Activated CD4-positive, alpha-beta memory T cell treated with anti-CD3 and anti-CD28 coated beads for 36 hours (primary cell): ENCODE measurements at regions of chr3 and their contacts with region 1.

Region 1: DNA sequence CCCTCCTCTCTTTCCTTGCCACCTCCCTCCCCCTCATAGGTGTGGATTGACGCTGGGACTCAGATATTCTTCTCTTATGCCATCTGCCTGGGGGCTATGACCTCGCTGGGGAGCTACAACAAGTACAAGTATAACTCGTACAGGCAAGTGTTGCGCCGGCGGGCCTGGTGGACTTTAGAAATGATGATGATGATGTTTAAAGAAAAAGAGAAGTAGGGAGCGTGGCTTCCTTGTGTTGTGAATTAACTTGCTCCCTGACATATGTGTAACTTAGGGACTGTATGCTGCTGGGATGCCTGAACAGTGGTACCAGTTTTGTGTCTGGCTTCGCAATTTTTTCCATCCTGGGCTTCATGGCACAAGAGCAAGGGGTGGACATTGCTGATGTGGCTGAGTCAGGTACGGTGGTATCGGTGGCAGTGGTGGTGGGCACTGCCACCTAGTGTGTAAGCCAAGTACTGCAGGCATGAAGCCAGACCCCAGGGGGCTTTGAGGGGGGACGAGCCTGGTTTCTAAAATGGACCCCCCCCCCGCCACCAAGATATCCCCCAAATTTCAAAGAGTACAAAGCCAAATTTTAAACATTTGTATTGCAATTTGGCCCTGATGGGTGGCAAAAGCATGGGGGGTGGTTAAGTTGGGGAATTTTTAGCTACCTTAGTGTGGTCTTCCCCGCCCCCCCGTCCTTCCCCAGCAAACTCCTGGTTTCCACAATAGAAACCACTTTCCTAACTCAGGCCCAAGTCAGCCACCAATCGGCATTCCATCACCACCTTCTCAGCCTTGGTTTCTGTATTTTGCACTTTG is 65.6 kb downstream of the SLC6A6 start:
- DNase-seq: peak; percentile 49
- H3K4me3 Mint-ChIP-seq: no peak overlapping the region
- H3K27ac Mint-ChIP-seq: no peak overlapping the region
- H3K4me1 Mint-ChIP-seq: peaks cover 4% of the 10 kb centered on the region
- H3K27me3 Mint-ChIP-seq: no peaks in the 10 kb centered on the region

Region 2: DNA sequence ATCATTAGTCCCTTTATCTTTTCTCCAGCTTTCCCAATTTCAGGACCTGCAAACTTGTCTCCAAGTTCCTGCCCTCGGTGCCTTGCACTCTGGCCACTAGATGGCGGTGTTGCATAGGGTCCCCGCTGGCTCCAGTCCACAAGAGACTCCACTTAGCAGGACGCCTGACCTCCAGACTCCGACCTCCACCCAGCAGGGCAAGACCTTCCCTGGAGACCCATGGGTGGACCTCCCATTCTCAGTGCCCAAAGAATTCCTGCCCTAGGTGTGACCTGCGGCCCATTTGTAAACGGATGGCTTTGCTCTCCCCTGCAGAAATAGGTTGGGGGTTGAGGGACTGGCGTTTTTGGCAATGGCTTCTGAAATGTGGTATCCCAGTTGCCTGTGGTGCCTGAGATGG is 206.8 kb before region 1 on chr3:
- CTCF ChIA-PET with region 1: interaction called, 31 read pairs
- POLR2A ChIA-PET with region 1: no interaction called
- intact Hi-C with region 1: loop called (anchors 1 kb)
- DNase-seq: peak; percentile 83
- H3K4me3 Mint-ChIP-seq: no peak overlapping the region
- H3K27ac Mint-ChIP-seq: no peak overlapping the region
- H3K4me1 Mint-ChIP-seq: no peaks in the 10 kb centered on the region
- H3K27me3 Mint-ChIP-seq: peaks cover 16% of the 10 kb centered on the region

Region 3: DNA sequence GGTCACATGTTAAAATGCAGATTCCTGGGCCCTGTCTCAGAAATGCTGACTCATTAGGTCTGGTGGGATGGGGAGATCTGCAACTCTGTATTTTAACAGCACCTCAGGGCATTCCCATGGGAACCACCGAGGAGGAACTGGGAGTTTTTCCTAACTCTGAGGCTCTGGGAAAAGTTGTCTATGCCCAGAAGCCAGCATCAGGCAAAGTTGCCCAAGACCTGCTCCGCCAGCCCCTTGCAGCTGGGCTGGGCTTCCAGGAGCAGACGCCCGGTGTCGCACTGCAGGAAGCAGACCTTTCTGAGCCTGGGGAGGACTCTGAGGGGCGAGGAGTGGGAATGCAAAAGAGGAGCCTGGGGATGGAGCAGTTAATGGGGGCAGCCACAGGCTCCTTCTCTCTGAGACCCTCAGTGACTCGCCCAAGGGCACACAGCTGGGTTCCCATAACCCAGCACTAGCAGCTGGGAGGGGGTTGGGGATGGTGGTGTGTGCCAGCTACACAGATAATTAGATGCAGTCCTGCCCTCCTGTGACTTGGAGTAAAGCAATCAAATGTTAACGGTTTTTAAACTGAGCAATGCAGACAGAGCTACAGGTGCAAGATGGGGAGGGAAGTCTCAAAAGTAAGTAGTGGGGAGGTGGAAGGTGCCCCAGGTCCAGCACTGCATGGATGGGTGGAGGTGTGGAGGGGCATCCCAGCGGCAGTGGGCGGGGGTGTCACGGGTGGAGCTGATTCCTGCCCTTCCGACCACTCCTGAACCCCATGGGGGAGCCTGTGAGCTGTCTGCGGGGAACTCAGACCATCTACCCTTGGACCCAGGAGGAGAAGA is 189.0 kb before region 1 on chr3:
- CTCF ChIA-PET with region 1: interaction called, 10 read pairs
- POLR2A ChIA-PET with region 1: no interaction called
- intact Hi-C with region 1: no loop called
- DNase-seq: no peak
- H3K4me3 Mint-ChIP-seq: no peak overlapping the region
- H3K27ac Mint-ChIP-seq: no peak overlapping the region
- H3K4me1 Mint-ChIP-seq: no peaks in the 10 kb centered on the region
- H3K27me3 Mint-ChIP-seq: no peaks in the 10 kb centered on the region

Region 4: GRCh38 chr3:14446988-14447570 is 20.9 kb before region 1 on chr3:
- CTCF ChIA-PET with region 1: no interaction called
- POLR2A ChIA-PET with region 1: no interaction called
- intact Hi-C with region 1: no loop called
- DNase-seq: no peak
- H3K4me3 Mint-ChIP-seq: no peak overlapping the region
- H3K27ac Mint-ChIP-seq: no peak overlapping the region
- H3K4me1 Mint-ChIP-seq: peaks cover 6% of the 10 kb centered on the region
- H3K27me3 Mint-ChIP-seq: no peaks in the 10 kb centered on the region

Region 5: DNA sequence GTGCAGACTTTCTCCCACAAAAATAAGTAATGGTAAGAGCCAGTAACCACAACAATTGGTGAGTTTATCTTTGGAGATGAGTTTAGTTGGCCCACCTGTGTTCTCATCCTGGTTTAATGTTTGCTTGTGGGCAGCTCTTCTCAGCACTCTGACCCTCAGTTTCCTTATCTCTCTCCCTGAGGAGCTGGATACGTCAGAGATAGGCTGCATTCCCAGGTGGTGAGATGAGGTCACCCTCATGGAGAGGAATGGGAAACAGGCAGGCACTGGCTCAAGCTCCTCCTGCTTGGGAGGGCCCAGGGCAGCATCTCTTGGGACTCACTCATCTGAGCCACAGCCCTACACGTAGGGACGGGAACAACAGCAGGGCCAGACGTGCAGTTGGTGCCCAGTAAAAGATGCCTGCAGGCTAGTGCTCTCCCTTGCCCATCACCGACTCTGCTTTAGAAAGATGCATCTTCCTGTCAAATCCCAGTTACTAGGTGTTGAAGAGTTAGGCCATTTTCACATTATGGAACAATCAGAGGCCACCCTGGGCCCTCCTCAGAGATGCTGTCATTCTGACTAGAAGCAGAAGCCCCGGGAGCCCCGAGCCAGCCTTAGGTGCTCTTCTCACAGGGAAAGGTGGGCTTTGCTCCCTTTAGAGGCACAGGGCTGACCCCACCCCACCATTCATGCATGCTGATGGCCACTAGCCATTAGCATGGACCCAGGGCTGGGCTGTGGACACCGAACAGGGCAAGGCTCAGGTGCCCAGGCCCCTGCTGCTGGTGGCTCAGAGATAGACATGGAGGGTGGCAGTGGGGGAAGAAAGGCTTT is 12.4 kb after region 1 on chr3:
- CTCF ChIA-PET with region 1: interaction called, 14 read pairs
- POLR2A ChIA-PET with region 1: no interaction called
- intact Hi-C with region 1: no loop called
- DNase-seq: no peak
- H3K4me3 Mint-ChIP-seq: no peak overlapping the region
- H3K27ac Mint-ChIP-seq: no peak overlapping the region
- H3K4me1 Mint-ChIP-seq: no peaks in the 10 kb centered on the region
- H3K27me3 Mint-ChIP-seq: no peaks in the 10 kb centered on the region